A549 (cell line): ENCODE measurements at regions of chr7 and their contacts with region 1.

Region 1: GRCh38 chr7:100705753-100706671 is at the start of gene POP7:
- DNase-seq: peak; percentile 91 to 99
- ATAC-seq: peak; percentile 95 to 96
- H3K4me3 ChIP-seq: peak within 1 kb of the TSS; percentile 76
- H3K27ac ChIP-seq: peak within 1 kb of the TSS; percentile 91 to 96
- H3K4me1 ChIP-seq: peaks cover 12% of the 10 kb centered on the region
- CTCF ChIP-seq: no peak
- EP300 ChIP-seq: no peak
- POLR2A ChIP-seq: peak; percentile 72
- RAD21 ChIP-seq: no peak
- polyA plus RNA-seq, gene POP7: 29.5 and 37.3 TPM in 2 replicates

Region 2: GRCh38 chr7:100626530-100627237 is 79.3 kb before region 1 on chr7:
- CTCF ChIA-PET with region 1: interaction called, 12 read pairs
- POLR2A ChIA-PET with region 1: no interaction called
- DNase-seq: peak; percentile 85 to 98
- ATAC-seq: peak; percentile 93 to 96
- H3K4me3 ChIP-seq: peak overlapping the region; percentile 37
- H3K27ac ChIP-seq: peak overlapping the region; percentile 65 to 89; a peak in 5 of 6 replicates
- H3K4me1 ChIP-seq: 0 out of 3 replicates have a peak, but pooled peaks cover 4% of the 10 kb centered on the region
- CTCF ChIP-seq: no peak
- EP300 ChIP-seq: no peak
- POLR2A ChIP-seq: no peak
- RAD21 ChIP-seq: no peak

Region 3: DNA sequence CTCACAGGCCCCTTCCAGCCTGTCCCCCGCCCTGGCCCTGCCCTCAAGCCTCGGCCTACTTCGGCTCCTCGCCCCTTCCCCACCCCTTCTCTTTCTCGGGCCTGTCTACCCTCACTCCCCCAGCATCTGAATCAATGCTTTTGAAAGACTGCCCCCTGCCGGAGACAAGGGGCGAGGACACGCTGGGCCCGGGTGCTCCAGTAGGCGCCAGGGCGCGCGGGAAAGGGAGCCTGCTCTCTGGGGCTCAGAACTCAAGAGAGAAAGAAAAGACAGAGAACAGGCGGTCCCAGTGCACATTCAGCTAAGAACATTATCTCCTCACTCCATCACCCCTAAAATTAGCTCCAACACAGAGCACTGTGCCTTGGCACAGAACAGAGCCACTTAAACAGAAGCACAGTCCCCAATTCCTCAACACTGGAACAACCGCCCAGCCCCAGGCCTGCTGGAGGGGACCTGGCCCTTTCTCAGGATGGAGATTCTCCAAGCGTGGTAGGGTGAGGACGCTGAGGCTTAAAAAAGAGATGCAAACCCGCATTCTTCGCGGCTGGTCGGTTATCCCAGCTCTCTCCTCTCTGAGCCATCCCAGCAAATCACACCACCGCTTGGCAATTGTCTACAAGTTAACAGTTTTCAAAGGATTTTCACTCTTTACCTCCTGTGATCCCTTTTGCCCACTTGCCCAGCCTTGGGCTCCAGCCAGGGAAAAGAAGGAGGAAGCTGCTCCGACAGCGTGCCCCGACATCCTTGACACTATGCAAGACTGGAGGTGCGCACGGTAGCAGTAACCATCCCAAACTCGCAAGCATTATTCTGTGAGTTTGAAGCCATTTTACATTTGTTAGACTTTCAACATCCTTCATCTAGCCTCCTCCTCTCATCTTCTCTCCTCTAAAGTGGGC is 14.1 kb before region 1 on chr7:
- CTCF ChIA-PET with region 1: interaction called, 158 read pairs
- POLR2A ChIA-PET with region 1: interaction called, 13 read pairs
- DNase-seq: peak; percentile 74 to 93
- ATAC-seq: peak; percentile 72 to 94; a peak in 5 of 6 replicates
- H3K4me3 ChIP-seq: no peak overlapping the region
- H3K27ac ChIP-seq: no peak overlapping the region
- H3K4me1 ChIP-seq: peaks cover 26% of the 10 kb centered on the region
- CTCF ChIP-seq: peak; percentile 87
- EP300 ChIP-seq: no peak
- POLR2A ChIP-seq: no peak
- RAD21 ChIP-seq: peak; percentile 75 to 78

Region 4: DNA sequence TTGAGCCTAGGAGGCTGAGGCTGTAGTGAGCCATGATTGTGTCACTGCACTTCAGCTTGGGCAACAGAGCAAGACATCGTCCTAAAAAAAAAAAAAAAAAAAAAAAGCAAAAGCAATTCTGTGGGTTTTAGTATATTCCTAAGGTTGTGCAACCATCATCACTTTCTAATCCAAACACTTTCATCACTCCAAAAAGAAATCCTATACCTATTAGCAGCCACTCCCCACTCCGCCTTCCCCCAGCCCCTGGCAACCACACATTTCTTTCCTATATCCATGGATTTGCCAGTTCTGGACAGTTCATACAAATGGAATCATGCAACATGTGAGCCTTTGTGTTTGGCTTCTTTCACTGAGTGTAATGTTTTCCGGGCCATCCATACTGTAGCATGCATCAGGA is 47.7 kb after region 1 on chr7:
- CTCF ChIA-PET with region 1: interaction called, 10 read pairs
- POLR2A ChIA-PET with region 1: no interaction called
- DNase-seq: no peak
- ATAC-seq: 0 out of 6 replicates have a peak, but pooled peaks of 1 of the 2 experiments have one; percentile 23
- H3K4me3 ChIP-seq: no peak overlapping the region
- H3K27ac ChIP-seq: no peak overlapping the region
- H3K4me1 ChIP-seq: no peaks in the 10 kb centered on the region
- CTCF ChIP-seq: no peak
- EP300 ChIP-seq: no peak
- POLR2A ChIP-seq: no peak
- RAD21 ChIP-seq: no peak

Region 5: GRCh38 chr7:100803398-100804233 is 97.6 kb after region 1 on chr7:
- CTCF ChIA-PET with region 1: interaction called, 35 read pairs
- POLR2A ChIA-PET with region 1: interaction called, 4 read pairs
- DNase-seq: peak; percentile 76 to 78
- ATAC-seq: peak; percentile 35 to 74; a peak in 4 of 6 replicates
- H3K4me3 ChIP-seq: no peak overlapping the region
- H3K27ac ChIP-seq: peak overlapping the region; percentile 83 to 95
- H3K4me1 ChIP-seq: peaks cover 53% of the 10 kb centered on the region
- CTCF ChIP-seq: no peak
- EP300 ChIP-seq: no peak
- POLR2A ChIP-seq: no peak
- RAD21 ChIP-seq: no peak

Region 6: GRCh38 chr7:100852048-100852872 is 146.2 kb after region 1 on chr7 and contains the start of gene SLC12A9:
- CTCF ChIA-PET with region 1: interaction called, 162 read pairs
- POLR2A ChIA-PET with region 1: interaction called, 19 read pairs
- DNase-seq: peak; percentile 86 to 98
- ATAC-seq: peak; percentile 98 to 99
- H3K4me3 ChIP-seq: peak within 1 kb of the TSS; percentile 77
- H3K27ac ChIP-seq: peak within 1 kb of the TSS; percentile 76 to 85
- H3K4me1 ChIP-seq: 0 out of 3 replicates have a peak, but pooled peaks cover 4% of the 10 kb centered on the region
- CTCF ChIP-seq: peak; percentile 95
- EP300 ChIP-seq: no peak
- POLR2A ChIP-seq: peak; percentile 48; the same call in 1 of the 2 replicates
- RAD21 ChIP-seq: peak; percentile 94 to 98
- polyA plus RNA-seq, gene SLC12A9: 6.2 and 7.0 TPM in 2 replicates